CD4-positive, alpha-beta memory T cell (primary cell): ENCODE measurements at regions of chr11 and their contacts with region 1.

Region 1: GRCh38 chr11:114052160-114052559 is 7.4 kb upstream of the ZBTB16 start:
- DNase-seq: no peak
- H3K4me3 ChIP-seq: no peak overlapping the region
- H3K4me3 Mint-ChIP-seq: no peak overlapping the region
- H3K27ac ChIP-seq: no peak overlapping the region
- H3K27ac Mint-ChIP-seq: no peak overlapping the region
- H3K4me1 ChIP-seq: no peaks in the 10 kb centered on the region
- H3K4me1 Mint-ChIP-seq: no peaks in the 10 kb centered on the region
- H3K27me3 ChIP-seq: no peaks in the 10 kb centered on the region
- H3K27me3 Mint-ChIP-seq: peaks cover 0 to 3% of the 10 kb centered on the region in 2 donors

Region 2: GRCh38 chr11:113974741-113975470 is 77.3 kb before region 1 on chr11 and contains the start of gene HTR3A:
- CTCF ChIA-PET with region 1: no interaction called
- POLR2A ChIA-PET with region 1: no interaction called
- intact Hi-C with region 1: no loop called
- DNase-seq: no peak
- H3K4me3 ChIP-seq: no peak within 1 kb of the TSS
- H3K4me3 Mint-ChIP-seq: no peak within 1 kb of the TSS
- H3K27ac ChIP-seq: no peak within 1 kb of the TSS
- H3K27ac Mint-ChIP-seq: no peak within 1 kb of the TSS
- H3K4me1 ChIP-seq: no peaks in the 10 kb centered on the region
- H3K4me1 Mint-ChIP-seq: peaks cover 0 to 2% (median 0%) of the 10 kb centered on the region in 4 donors
- H3K27me3 ChIP-seq: no peaks in the 10 kb centered on the region
- H3K27me3 Mint-ChIP-seq: peaks cover 7 to 10% of the 10 kb centered on the region in 2 donors
- total RNA-seq, gene HTR3A: not detected

Region 3: GRCh38 chr11:114257621-114258558 is 205.7 kb after region 1 on chr11:
- CTCF ChIA-PET with region 1: interaction called, 66 read pairs
- POLR2A ChIA-PET with region 1: interaction called, 3 read pairs
- intact Hi-C with region 1: no loop called
- DNase-seq: no peak
- H3K4me3 ChIP-seq: no peak overlapping the region
- H3K4me3 Mint-ChIP-seq: no peak overlapping the region
- H3K27ac ChIP-seq: no peak overlapping the region
- H3K27ac Mint-ChIP-seq: peak overlapping the region in 1 of 7 donors; percentile 32
- H3K4me1 ChIP-seq: no peaks in the 10 kb centered on the region
- H3K4me1 Mint-ChIP-seq: peaks cover 0 to 3% (median 0%) of the 10 kb centered on the region in 4 donors
- H3K27me3 ChIP-seq: no peaks in the 10 kb centered on the region
- H3K27me3 Mint-ChIP-seq: no peaks in the 10 kb centered on the region